Ovary (tissue), 10 donors: ENCODE measurements at regions of chr11 and their contacts with region 1.

Region 1: GRCh38 chr11:9757809-9758636 is 94.1 kb downstream of the SWAP70 start:
- DNase-seq: peak; percentile 86 to 92 (median 90)
- H3K4me3 ChIP-seq: peak overlapping the region; percentile 56
- H3K27ac ChIP-seq: peak overlapping the region; percentile 78 to 83
- H3K4me1 ChIP-seq: peaks cover 16% of the 10 kb centered on the region
- H3K27me3 ChIP-seq: no peaks in the 10 kb centered on the region
- CTCF ChIP-seq: peak; percentile 72 to 98 (median 98)
- EP300 ChIP-seq: no peak
- POLR2A ChIP-seq: peak; percentile 41

Region 2: GRCh38 chr11:8477680-8478079 is 1280.3 kb before region 1 on chr11:
- intact Hi-C with region 1: no loop called
- DNase-seq: no peak
- H3K4me3 ChIP-seq: no peak overlapping the region
- H3K27ac ChIP-seq: no peak overlapping the region
- H3K4me1 ChIP-seq: no peaks in the 10 kb centered on the region
- H3K27me3 ChIP-seq: no peaks in the 10 kb centered on the region
- CTCF ChIP-seq: no peak
- EP300 ChIP-seq: no peak
- POLR2A ChIP-seq: no peak

Region 3: DNA sequence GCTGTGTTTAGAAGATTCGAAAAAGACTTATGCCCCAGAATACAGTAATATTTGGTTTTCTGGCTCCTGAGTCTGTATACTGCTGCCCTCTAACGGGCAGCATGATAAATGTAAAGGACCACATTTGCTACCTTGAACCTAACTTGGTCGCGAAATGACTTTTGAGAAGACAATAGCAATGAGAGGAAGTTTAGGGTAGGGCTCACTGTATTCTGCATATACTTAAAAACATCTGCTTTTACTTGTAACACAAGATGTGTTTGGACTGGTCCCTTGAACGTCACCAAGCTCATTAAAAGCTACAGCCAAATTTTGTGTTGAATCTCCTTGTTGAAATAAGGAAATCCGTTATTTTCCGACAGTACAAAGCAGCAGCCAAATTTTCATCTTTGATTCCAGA is 215.0 kb after region 1 on chr11:
- intact Hi-C with region 1: loop called (anchors 2 to 10 kb)
- DNase-seq: peak in 1 of 5 donors; percentile 29
- H3K4me3 ChIP-seq: no peak overlapping the region
- H3K27ac ChIP-seq: no peak overlapping the region
- H3K4me1 ChIP-seq: no peaks in the 10 kb centered on the region
- H3K27me3 ChIP-seq: no peaks in the 10 kb centered on the region
- CTCF ChIP-seq: peak; percentile 18 to 67 (median 60)
- EP300 ChIP-seq: no peak
- POLR2A ChIP-seq: no peak

Region 4: DNA sequence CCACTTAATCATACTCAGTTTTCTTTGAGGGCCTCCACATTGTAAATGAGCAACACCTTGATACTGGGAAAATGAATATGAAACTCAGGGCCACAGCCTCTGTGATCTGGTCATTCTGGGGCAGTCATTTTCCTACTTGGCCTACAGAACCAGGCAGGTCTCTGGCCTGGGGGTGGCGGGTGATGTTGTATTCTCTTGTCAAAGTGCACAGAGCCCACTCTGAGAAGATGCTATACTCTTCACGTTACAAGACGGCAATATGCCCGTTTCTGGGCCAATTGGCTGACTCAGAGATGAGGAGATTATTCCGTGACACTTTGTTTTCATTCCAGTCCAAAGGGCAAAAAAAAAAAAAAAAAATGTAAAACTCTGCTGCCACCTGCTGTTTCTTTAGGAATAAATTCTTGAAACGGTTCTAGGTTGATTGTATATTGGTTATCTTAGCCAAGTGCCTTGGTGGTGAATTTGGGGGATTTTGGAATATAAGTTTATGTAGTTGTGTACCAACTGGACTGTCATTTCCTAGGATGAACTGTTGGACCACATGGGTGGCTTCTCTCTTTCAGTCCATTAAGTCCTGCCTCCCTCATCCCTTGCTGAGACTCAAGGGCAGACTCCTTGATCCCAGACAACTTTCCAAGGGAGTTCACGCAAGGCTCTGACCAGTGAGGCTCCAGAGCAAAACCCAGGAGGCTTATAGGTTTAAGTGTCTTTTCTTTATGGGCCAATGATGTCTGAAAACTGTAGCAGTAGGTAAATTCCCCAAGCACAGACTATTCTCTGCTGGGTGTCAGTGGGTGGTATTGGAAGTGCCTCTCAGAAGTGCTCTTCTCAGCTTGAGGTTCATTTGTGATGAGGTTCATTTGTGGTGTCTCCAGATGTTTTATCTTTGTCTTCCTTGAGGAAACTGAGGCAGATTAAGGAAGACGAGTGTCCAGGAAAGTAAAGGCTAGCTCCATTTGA is 565.1 kb after region 1 on chr11:
- intact Hi-C with region 1: loop called in 2 of 4 experiments (anchors 5 kb)
- DNase-seq: peak in 3 of 5 donors; percentile 46 to 64 (median 52)
- H3K4me3 ChIP-seq: no peak overlapping the region
- H3K27ac ChIP-seq: no peak overlapping the region
- H3K4me1 ChIP-seq: peaks cover 37% of the 10 kb centered on the region
- H3K27me3 ChIP-seq: no peaks in the 10 kb centered on the region
- CTCF ChIP-seq: peak; percentile 38 to 67 (median 56)
- EP300 ChIP-seq: no peak
- POLR2A ChIP-seq: no peak